Common myeloid progenitor, CD34-positive (primary cell): ENCODE measurements at regions of chr22 and their contacts with region 1.

Region 1: DNA sequence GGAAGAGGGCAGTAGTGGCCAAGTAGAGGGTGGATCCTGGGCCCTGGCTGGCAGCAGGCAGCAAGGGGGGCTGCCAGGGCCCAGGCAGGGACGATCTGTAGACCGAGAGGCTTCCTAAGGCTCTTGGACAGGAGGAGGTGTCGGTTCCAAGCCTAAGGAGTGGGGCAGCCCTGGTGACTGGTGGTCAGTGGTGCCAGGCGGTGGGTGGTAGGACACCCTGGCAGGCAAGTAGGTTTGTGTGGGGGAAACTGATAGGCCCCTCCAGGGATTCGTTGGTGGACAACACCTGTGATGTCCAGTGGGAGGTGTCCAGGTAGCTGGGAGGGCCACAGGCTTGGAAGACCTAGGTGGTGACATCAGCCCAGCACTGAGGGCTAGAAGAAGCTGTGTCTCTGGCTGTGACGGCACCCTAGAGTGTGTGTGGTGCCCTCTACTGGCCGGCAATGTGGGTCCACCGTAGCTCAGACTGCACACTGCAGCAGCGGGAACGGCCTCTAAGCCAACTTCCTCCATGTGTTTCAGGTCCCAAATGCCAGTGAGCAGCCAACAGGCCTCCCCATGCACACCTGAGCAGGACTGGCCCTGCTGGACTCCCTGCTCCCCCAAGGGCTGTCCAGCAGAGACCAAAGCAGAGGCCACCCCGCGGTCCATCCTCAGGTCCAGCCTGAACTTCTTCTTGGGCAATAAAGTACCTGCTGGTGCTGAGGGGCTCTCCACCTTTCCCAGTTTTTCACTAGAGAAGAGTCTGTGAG is 9.4 kb upstream of the SAMM50 start:
- DNase-seq: peak; percentile 68 to 83 (median 77)
- H3K4me3 ChIP-seq: no peak overlapping the region
- H3K27ac ChIP-seq: no peak overlapping the region
- H3K4me1 ChIP-seq: peaks cover 0 to 2% (median under 1%) of the 10 kb centered on the region in 4 experiments
- H3K27me3 ChIP-seq: peaks cover 0 to 9% (median 0%) of the 10 kb centered on the region in 5 experiments

Region 2: GRCh38 chr22:43867839-43868652 is 77.8 kb before region 1 on chr22:
- CTCF ChIA-PET with region 1: no interaction called
- POLR2A ChIA-PET with region 1: no interaction called
- DNase-seq: peak; percentile 43 to 71 (median 70)
- H3K4me3 ChIP-seq: no peak overlapping the region
- H3K27ac ChIP-seq: no peak overlapping the region
- H3K4me1 ChIP-seq: no peaks in the 10 kb centered on the region
- H3K27me3 ChIP-seq: peaks cover 7 to 27% (median 14%) of the 10 kb centered on the region in 5 experiments

Region 3: DNA sequence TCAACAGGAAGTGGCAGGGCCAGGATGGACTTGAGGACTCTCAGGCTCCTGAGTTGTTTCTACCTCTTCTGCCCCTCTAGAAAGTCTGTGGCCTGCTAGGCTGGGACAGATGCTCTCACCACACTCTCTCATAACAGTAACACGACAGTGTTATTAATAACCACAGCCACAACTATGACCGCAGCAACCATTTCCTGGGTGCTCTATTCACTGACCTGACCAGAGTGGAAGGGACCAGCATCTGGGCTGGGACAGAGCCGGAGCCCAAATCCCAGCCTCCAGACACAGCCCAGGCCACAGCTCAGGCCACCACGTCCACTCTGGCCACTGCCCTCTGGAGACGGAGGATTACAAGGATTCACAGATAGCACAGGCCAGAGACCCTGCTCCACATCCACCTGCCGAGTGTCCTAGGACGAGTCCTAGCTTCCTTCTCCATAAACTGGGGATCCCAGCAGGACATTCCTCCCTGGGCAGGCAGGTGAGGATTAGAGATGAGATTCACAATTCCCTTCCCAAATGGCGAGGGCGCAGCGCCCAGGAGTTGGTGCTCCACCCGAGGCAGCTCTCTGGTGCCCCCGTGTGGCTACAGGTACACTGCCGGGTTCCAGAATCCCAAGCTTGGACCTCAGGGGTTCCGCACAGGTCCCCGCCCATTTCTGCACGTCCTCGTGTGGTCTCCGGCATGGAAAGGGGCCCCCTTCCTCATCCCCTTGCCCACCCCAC is 61.0 kb before region 1 on chr22:
- CTCF ChIA-PET with region 1: interaction called, 22 read pairs
- POLR2A ChIA-PET with region 1: no interaction called
- DNase-seq: peak; percentile 36 to 56 (median 48)
- H3K4me3 ChIP-seq: no peak overlapping the region
- H3K27ac ChIP-seq: no peak overlapping the region
- H3K4me1 ChIP-seq: no peaks in the 10 kb centered on the region
- H3K27me3 ChIP-seq: peaks cover 0 to 24% (median 6%) of the 10 kb centered on the region in 5 experiments

Region 4: DNA sequence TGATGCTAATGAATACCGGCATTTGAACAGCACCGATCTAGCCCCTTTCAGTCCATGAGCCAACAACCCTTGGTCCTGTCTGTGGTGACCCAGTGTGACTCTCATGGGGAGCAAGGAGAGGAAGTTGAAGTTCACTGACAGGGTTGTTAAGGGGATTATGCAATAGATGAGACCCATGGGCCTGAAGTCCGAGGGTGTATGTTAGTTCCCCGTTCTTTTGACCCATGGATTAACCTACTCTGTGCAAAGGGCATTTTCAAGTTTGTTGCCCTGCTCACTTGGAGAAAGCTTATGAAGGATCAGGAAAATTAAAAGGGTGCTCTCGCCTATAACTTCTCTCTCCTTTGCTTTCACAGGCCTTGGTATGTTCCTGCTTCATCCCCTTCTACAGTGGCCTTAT is 17.3 kb before region 1 on chr22:
- CTCF ChIA-PET with region 1: interaction called, 11 read pairs
- POLR2A ChIA-PET with region 1: no interaction called
- DNase-seq: peak in 1 of 3 donors; percentile 15
- H3K4me3 ChIP-seq: no peak overlapping the region
- H3K27ac ChIP-seq: no peak overlapping the region
- H3K4me1 ChIP-seq: peaks cover 0 to 16% (median 7%) of the 10 kb centered on the region in 4 experiments
- H3K27me3 ChIP-seq: peaks cover 0 to 44% (median 6%) of the 10 kb centered on the region in 5 experiments

Region 5: DNA sequence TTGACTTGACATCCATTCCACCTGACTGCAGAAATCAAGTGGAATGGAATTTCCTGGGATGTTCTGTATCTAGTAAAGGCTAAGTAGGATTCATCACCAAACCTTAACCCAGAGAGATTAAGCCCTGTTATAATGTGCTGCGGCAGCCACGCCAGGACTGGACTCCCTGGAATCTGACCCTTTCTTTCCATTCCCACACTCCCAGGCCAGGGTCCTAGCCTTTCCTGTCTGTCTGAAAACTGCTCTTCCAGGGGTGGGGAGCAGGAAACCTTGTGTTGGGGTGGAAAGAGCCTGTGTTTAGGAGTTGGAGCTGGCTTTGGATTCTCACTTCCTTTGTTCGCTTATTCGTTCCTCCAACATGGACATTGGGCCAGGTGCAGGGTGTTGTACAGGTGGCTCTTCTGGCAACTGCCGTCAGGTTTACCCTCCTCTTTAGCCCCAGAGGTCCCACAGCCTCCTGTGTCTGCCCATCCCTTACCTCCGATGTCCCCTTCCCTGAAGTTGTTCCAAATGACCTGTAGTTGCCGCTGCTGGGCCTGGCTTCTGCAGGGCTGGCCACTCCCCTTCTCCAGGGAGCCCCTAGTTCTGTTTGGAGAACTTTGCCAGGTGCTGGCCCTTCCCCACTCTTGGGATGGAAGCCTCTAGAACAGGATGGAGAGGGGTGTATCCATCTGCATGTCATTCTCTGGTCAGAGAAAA is 57.7 kb after region 1 on chr22:
- CTCF ChIA-PET with region 1: no interaction called
- POLR2A ChIA-PET with region 1: no interaction called
- DNase-seq: no peak
- H3K4me3 ChIP-seq: no peak overlapping the region
- H3K27ac ChIP-seq: no peak overlapping the region
- H3K4me1 ChIP-seq: peaks cover 0 to 4% (median 0%) of the 10 kb centered on the region in 4 experiments
- H3K27me3 ChIP-seq: no peaks in the 10 kb centered on the region

Region 6: DNA sequence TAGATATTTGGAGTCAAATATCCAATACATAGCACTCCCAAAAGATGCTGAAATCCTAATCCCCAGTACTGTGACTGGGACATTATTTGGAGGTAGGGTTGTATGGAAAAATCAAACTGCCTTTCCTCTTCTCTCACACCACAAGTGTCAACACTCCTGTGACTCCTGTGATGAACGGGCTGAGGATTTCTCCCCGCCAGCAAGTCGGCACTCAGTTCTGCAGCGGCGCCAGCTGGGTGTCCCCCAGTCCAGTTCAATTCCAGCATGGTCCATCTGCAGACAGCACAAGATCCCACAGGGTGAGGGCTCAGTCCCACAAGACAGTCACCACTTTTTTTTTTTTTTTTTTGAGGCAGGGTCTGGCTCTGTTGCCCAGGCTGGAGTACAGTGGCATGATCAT is 74.0 kb after region 1 on chr22:
- CTCF ChIA-PET with region 1: no interaction called
- POLR2A ChIA-PET with region 1: no interaction called
- DNase-seq: no peak
- H3K4me3 ChIP-seq: no peak overlapping the region
- H3K27ac ChIP-seq: no peak overlapping the region
- H3K4me1 ChIP-seq: peaks cover 0 to 21% (median 13%) of the 10 kb centered on the region in 4 experiments
- H3K27me3 ChIP-seq: no peaks in the 10 kb centered on the region

Region 7: DNA sequence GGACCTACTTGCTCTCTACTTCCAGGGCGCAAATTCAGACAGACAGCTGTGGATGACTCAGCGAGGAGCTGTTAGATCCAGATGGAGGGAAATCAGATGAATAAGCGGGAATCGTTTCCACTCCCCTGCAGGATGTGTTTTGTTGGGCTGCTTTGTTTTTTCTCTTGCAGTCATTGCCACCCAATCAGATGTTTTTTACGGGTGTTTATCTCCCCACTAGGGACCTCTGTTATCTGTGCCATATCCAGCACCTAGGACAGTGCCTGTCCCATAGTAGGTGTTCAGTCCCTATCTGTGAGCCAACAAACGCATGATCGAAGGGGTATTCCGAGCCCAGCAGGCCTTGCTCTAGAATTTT is 183.8 kb after region 1 on chr22:
- CTCF ChIA-PET with region 1: no interaction called
- POLR2A ChIA-PET with region 1: no interaction called
- DNase-seq: no peak
- H3K4me3 ChIP-seq: no peak overlapping the region
- H3K27ac ChIP-seq: no peak overlapping the region
- H3K4me1 ChIP-seq: peaks cover 2 to 38% (median 15%) of the 10 kb centered on the region in 4 experiments
- H3K27me3 ChIP-seq: no peaks in the 10 kb centered on the region